ENCODE measurements at regions of chr11 and their contacts with region 1.

Region 1: DNA sequence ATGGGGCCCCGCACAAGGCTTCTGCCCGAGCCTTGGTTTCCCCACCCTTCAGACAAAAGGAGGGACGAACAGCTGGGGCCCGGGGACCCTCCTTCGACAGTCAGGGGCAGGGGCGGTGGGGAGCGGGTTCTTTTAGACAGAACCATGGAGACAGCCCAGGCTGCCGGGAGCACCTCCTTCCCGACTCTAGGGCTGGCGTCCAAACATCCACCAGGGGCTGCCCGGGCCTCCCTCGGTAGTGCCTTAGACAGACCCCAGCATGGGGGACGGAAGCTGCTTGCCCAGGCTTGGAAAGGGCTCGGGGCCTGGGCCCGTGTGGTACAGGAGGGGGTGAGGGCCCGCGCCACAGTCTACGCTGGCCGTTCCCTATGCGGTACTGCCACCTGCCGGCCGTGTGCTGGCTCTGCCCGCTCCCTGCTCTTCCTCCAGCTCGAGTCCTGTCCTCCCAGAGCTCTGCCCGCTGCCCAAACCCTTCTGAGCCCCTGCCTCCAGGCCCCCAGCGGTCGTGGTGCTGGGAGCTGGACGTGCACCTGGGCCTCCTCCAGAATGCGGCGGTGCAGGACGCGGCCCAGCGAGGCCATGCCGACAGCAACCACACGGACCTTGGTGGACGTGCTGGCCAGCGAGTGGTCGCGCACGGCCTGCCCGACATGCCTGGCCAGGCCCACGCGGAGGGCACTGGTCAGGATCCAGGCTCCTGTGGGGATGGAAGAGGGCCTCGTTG is 20.1 kb downstream of the TSSC4 start:
- DNase-seq: peak; percentile 83
- ATAC-seq: peak; percentile 97

Region 2: DNA sequence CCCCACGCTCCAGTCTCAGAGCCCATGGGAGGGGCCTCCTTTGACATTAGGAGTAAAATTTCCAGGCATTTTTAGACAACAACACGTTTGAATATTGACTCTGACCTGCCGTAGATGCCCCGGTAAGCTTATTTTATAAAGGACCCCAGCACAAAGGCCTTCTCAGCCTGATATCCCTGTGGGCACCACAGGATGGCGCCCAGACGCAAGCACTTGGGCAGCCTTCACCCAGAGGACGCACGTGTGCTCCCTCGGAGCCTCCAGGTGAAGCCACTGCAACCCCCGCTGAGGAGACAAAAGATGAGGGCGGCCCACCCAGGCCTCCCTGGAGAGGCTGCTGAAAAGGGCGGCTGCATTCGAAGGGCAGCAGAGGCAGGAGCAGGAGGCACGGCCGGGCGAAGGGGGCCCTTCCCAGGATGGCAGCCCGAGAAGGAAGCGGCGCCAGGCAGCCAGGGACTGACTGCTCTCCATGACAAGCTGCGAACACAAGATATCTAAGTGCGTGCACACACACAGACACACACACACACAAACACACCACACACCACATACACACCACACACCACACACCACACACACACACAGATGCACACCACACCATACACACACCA is 233.9 kb before region 1 on chr11:
- intact Hi-C with region 1: loop called (anchors 2 kb)
- DNase-seq: no peak
- ATAC-seq: peak; percentile 81

Region 3: GRCh38 chr11:2366261-2366660 is 54.4 kb before region 1 on chr11:
- intact Hi-C with region 1: no loop called
- DNase-seq: no peak
- ATAC-seq: peak; percentile 13